CD4-positive, alpha-beta memory T cell (primary cell): ENCODE measurements at regions of chr1 and their contacts with region 1.

Region 1: DNA sequence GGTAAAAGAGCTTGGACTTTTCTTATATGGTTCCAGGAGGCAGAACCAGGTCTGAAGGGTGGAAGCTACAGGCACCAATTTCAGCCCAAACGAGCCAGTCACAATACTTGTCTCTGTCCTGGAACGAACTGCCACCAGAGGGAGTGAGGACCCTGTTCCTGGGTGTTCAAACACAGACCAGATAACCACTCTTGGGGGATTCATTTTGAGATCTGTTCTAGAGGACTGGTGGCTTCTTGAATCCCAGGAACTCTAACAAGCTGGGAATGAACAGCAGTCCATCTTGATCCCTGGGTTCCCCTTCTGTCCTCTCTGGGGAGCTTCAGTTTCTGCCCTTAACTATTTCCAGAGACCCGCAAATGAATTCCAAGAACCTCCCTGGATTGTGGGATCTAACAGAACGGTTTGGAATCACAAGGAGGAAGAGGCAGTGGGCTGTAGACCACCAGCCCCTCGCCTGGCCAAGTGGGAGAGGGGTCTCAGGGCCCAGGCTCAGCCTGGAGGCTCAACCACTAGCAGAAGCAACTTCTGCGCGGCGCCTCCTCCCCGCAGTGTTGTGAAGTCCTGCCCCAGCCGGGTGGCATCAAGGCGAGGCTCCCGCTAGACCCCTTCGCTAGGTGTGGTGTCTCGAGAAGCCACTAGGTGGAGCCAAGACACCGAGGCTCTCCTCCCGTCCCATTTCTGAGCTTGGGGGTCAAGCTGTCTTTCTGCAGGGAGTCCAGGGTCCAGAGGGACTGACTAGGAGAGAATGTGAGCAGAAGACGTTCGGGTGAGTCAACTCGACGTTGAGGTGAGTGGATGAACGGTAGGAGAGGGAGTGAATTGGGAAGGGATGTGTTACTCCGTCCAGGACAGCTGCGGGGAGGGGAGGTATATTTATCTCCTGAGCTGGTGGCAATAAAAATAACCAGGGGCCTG is 12.1 kb upstream of the NES start:
- DNase-seq: peak; percentile 70 to 77 (median 73)
- H3K4me3 ChIP-seq: peak overlapping the region in 1 of 2 donors; percentile 2
- H3K4me3 Mint-ChIP-seq: peak overlapping the region in 5 of 8 donors; percentile 25 to 69 (median 68)
- H3K27ac ChIP-seq: no peak overlapping the region
- H3K27ac Mint-ChIP-seq: peak overlapping the region in 2 of 7 donors; percentile 33 to 89
- H3K4me1 ChIP-seq: peaks cover 25% of the 10 kb centered on the region
- H3K4me1 Mint-ChIP-seq: peaks cover 8 to 23% (median 17%) of the 10 kb centered on the region in 4 donors
- H3K27me3 ChIP-seq: peaks cover 29% of the 10 kb centered on the region
- H3K27me3 Mint-ChIP-seq: peaks cover 30 to 39% of the 10 kb centered on the region in 2 donors

Region 2: DNA sequence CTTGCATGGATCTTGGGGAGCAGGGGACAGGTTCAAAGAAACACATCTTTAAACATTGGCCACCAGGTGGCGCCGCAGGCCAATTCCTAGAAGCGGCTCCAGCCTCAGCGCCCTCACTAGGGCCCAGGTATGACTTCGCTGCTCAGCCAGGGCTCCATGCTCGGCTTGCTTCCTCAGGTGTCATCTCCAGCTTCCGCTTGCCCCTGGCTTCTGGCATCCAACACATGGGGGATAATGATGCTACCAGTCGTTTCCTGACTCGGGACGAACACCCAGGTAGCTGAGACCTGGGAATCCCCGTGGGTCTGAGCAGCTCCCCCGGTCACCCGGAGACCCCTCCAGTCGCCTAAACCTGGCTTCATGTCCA is 598.5 kb before region 1 on chr1:
- CTCF ChIA-PET with region 1: no interaction called
- POLR2A ChIA-PET with region 1: no interaction called
- intact Hi-C with region 1: no loop called
- DNase-seq: peak; percentile 78 to 84 (median 81)
- H3K4me3 ChIP-seq: no peak overlapping the region
- H3K4me3 Mint-ChIP-seq: peak overlapping the region in 1 of 8 donors; percentile 16
- H3K27ac ChIP-seq: no peak overlapping the region
- H3K27ac Mint-ChIP-seq: peak overlapping the region in 5 of 7 donors; percentile 11 to 79 (median 61)
- H3K4me1 ChIP-seq: peaks cover 6% of the 10 kb centered on the region
- H3K4me1 Mint-ChIP-seq: peaks cover 6 to 18% (median 12%) of the 10 kb centered on the region in 4 donors
- H3K27me3 ChIP-seq: no peaks in the 10 kb centered on the region
- H3K27me3 Mint-ChIP-seq: peaks cover 6 to 7% of the 10 kb centered on the region in 2 donors

Region 3: DNA sequence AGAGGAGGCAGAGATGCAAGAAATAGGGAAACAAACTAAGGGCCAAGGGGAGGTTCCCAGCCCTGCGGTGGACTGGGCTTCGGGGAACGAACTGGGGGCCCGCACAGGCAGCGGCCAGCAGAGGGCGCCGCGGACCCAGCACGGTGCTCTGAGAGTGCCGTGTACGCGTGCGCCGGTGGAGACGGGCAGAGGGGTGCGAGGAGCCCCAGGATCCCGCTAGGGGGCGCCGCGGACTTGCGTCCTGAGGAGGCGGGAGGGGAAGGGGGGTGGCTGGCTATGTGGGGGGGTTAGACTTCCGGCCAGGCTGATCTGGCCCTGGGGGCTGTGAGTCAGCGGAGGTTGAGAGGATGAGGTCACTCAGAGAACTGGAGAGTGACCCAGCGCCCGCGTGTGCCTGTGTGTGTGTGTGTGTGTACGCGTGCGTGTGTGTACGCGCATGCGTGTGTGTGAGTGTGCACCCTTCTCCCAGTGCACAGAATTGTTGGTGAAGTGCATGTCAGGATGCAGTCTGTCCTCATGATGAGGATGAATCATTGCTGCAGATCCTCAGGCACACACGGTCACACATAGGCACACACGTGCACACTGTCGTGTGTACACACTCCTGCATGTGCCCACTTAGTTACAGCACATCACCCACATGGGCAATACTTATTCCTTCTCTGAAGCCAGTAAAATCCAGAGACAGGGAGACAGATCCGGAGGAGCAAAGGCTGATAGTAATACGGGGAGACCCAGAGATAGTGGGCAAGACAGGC is 29.1 kb before region 1 on chr1:
- CTCF ChIA-PET with region 1: interaction called, 18 read pairs
- POLR2A ChIA-PET with region 1: no interaction called
- intact Hi-C with region 1: no loop called
- DNase-seq: peak; percentile 87 to 90 (median 88)
- H3K4me3 ChIP-seq: peak overlapping the region in 1 of 2 donors; percentile 9
- H3K4me3 Mint-ChIP-seq: peak overlapping the region; percentile 45 to 74 (median 60)
- H3K27ac ChIP-seq: no peak overlapping the region
- H3K27ac Mint-ChIP-seq: peak overlapping the region in 6 of 7 donors; percentile 69 to 90 (median 84)
- H3K4me1 ChIP-seq: peaks cover 64% of the 10 kb centered on the region
- H3K4me1 Mint-ChIP-seq: peaks cover 30 to 69% (median 46%) of the 10 kb centered on the region in 4 donors
- H3K27me3 ChIP-seq: peaks cover 10% of the 10 kb centered on the region
- H3K27me3 Mint-ChIP-seq: peaks cover 18 to 22% of the 10 kb centered on the region in 2 donors

Region 4: GRCh38 chr1:156705918-156706656 is 16.8 kb after region 1 on chr1:
- CTCF ChIA-PET with region 1: interaction called, 187 read pairs
- POLR2A ChIA-PET with region 1: interaction called, 35 read pairs
- intact Hi-C with region 1: loop called (anchors 1 kb)
- DNase-seq: peak; percentile 67 to 72 (median 70)
- H3K4me3 ChIP-seq: peak overlapping the region; percentile 63 to 65
- H3K4me3 Mint-ChIP-seq: peak overlapping the region; percentile 88 to 96 (median 89)
- H3K27ac ChIP-seq: peak overlapping the region; percentile 63
- H3K27ac Mint-ChIP-seq: peak overlapping the region; percentile 84 to 94 (median 93)
- H3K4me1 ChIP-seq: peaks cover 32% of the 10 kb centered on the region
- H3K4me1 Mint-ChIP-seq: peaks cover 8 to 47% (median 24%) of the 10 kb centered on the region in 4 donors
- H3K27me3 ChIP-seq: peaks cover 6% of the 10 kb centered on the region
- H3K27me3 Mint-ChIP-seq: peaks cover 6 to 9% of the 10 kb centered on the region in 2 donors

Region 5: DNA sequence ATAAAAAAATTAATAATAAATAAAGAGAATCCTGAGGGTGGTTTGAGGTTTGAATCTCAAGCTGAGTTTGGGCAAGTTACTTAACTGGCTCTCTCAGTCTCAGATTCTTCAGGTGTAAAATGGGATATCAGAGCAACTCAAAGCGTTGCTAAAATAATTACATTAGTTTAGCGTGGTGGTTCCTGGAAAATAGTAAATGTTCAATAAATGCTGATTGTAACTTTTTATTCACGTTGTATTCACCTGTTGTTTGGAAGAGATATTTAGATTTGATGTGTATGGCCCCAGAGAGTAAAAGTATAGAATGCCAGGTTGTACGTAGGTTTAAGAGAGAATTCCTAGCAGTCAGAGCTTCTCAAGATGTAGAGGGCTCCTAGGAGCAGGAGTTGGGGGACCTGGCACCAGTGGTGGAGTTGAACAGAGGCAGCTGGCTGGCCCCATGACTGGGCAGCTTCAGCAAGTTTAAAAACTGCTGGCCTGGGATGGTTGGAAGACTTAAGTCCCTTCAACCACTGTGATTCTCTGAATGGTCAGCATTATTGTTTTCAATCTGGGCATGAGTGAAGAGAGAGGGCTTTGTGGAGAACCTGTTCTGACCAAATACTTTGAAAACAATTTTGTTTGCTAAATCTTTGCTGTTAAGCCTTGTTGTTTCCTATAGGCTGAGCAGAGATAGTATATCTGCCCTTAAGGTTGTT is 100.5 kb after region 1 on chr1:
- CTCF ChIA-PET with region 1: interaction called, 12 read pairs
- POLR2A ChIA-PET with region 1: no interaction called
- intact Hi-C with region 1: no loop called
- DNase-seq: no peak
- H3K4me3 ChIP-seq: no peak overlapping the region
- H3K4me3 Mint-ChIP-seq: no peak overlapping the region
- H3K27ac ChIP-seq: no peak overlapping the region
- H3K27ac Mint-ChIP-seq: peak overlapping the region in 2 of 7 donors; percentile 7 to 12
- H3K4me1 ChIP-seq: no peaks in the 10 kb centered on the region
- H3K4me1 Mint-ChIP-seq: peaks cover 0 to 6% (median 5%) of the 10 kb centered on the region in 4 donors
- H3K27me3 ChIP-seq: no peaks in the 10 kb centered on the region
- H3K27me3 Mint-ChIP-seq: no peaks in the 10 kb centered on the region

Region 6: GRCh38 chr1:156927215-156928042 is 238.1 kb after region 1 on chr1:
- CTCF ChIA-PET with region 1: interaction called, 7 read pairs
- POLR2A ChIA-PET with region 1: no interaction called
- intact Hi-C with region 1: loop called (anchors 1 kb)
- DNase-seq: peak; percentile 46 to 57 (median 55)
- H3K4me3 ChIP-seq: no peak overlapping the region
- H3K4me3 Mint-ChIP-seq: peak overlapping the region in 3 of 8 donors; percentile 27 to 62 (median 40)
- H3K27ac ChIP-seq: no peak overlapping the region
- H3K27ac Mint-ChIP-seq: no peak overlapping the region
- H3K4me1 ChIP-seq: peaks cover 21% of the 10 kb centered on the region
- H3K4me1 Mint-ChIP-seq: peaks cover 9 to 39% (median 18%) of the 10 kb centered on the region in 4 donors
- H3K27me3 ChIP-seq: peaks cover 48% of the 10 kb centered on the region
- H3K27me3 Mint-ChIP-seq: peaks cover 47 to 62% of the 10 kb centered on the region in 2 donors